ENCODE measurements at regions of chr11 and their contacts with region 1.

Region 1: DNA sequence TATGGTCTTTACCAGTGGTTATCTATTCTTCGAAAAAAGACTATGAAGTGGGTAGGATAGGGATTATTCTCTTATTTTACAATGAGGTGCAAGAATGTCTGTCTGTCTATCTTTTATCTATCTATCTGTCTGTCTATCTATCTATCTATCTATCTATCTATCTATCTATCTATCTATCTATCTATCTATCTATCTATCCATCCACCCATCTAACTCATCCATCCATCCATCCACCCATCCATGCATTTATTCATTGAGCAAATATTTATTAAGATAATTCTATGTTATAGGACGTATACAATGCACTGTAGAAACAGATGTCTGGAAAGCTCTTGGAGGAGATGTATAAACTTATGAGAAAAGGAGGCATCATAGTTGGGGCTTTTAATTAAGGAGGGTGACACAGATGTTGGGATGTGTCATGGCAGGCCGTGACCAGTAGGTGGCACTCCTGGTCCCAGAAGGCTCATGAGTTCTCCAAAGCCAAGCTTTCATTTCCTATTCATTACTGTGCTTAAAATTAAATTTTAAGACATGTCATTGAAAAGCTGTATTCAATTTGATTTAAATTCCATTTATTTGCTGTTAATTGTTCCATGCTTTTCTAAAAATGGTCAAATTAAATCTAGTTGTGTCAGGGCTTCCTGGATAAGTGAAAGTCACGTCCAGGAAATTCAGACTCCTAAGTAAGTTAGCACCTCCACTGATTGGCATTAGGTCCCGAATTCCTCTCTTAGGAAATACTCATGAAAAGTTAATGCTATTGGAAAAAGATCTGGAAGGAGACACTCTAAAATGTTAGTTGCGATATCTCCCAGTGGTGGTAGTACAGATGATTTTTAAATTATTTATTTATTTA is 19.0 kb upstream of the E2F8 start:
- DNase-seq: peak; percentile 73
- H3K4me3 ChIP-seq: peak overlapping the region in 1 of 2 experiments; percentile 24; a peak in 1 of 4 replicates
- H3K27ac ChIP-seq: no peak overlapping the region
- H3K4me1 ChIP-seq: no peaks in the 10 kb centered on the region
- H3K27me3 ChIP-seq: peaks cover 7% of the 10 kb centered on the region; the same call in 1 of the 2 replicates
- CTCF ChIP-seq: peak; percentile 97
- EP300 ChIP-seq: no peak
- RAD21 ChIP-seq: peak; percentile 77

Region 2: GRCh38 chr11:19076744-19077589 is 182.7 kb before region 1 on chr11:
- CTCF ChIA-PET with region 1: interaction called, 29 read pairs
- POLR2A ChIA-PET with region 1: no interaction called
- DNase-seq: peak; percentile 80
- H3K4me3 ChIP-seq: no peak overlapping the region; a peak in 1 of 4 replicates
- H3K27ac ChIP-seq: peak overlapping the region in 1 of 2 experiments; percentile 39; a peak in 1 of 4 replicates
- H3K4me1 ChIP-seq: peaks cover 0 to 15% of the 10 kb centered on the region in 2 experiments; a peak in 3 of 4 replicates
- H3K27me3 ChIP-seq: no peaks in the 10 kb centered on the region
- CTCF ChIP-seq: peak; percentile 98
- EP300 ChIP-seq: no peak
- RAD21 ChIP-seq: peak; percentile 72

Region 3: DNA sequence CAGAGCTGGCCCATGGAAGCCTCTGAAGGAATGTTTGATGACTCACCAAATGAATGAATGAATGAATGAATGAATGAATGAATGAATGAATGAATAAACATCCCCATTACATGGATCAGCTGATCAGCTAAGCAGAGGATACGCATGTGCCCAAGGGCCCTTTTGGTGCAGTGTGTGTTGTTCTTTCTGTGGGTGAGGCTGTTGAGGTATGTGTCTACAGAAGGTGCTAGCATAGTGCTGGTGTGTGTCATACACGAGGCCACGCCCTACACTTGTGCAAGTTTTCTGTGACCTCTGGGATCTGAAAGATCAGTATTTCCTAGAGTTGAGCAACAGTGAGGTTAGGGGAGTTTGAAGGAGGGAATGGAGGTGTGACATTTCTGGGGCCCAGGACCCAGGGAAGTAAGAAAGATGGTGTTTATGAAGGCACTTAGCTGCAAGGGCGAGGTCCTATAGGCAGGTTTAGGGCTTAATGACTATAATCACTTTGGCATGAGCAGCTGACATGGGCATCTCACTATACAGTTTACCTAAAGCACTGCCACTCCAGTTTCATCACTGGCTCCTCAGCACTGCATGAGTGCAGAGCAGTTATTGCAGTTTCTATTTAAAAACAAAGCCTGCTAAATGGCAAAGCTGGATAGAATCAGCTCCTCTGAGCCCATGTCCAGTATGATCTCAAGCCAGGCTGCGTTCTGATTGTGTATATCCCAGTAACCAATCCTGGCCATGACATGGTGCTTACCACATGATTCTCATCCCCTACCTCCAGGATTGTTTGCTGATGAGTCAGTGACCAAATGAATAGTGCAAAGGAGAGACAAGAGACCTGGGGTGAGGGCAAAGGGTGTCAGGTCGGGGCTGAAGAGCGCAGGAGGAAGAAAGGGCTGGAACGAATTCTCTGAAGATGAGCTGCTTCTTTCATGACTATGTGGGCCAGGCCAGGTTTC is 17.4 kb after region 1 on chr11:
- CTCF ChIA-PET with region 1: interaction called, 24 read pairs
- POLR2A ChIA-PET with region 1: no interaction called
- DNase-seq: no peak
- H3K4me3 ChIP-seq: no peak overlapping the region
- H3K27ac ChIP-seq: no peak overlapping the region
- H3K4me1 ChIP-seq: peaks cover 0 to 4% of the 10 kb centered on the region in 2 experiments; a peak in 1 of 4 replicates
- H3K27me3 ChIP-seq: 0 out of 2 replicates have a peak, but pooled peaks cover 4% of the 10 kb centered on the region
- CTCF ChIP-seq: no peak
- EP300 ChIP-seq: no peak
- RAD21 ChIP-seq: no peak

Region 4: GRCh38 chr11:19294444-19294843 is 34.7 kb after region 1 on chr11:
- CTCF ChIA-PET with region 1: interaction called, 15 read pairs
- POLR2A ChIA-PET with region 1: no interaction called
- DNase-seq: no peak
- H3K4me3 ChIP-seq: no peak overlapping the region
- H3K27ac ChIP-seq: no peak overlapping the region
- H3K4me1 ChIP-seq: no peaks in the 10 kb centered on the region; a peak in 1 of 4 replicates
- H3K27me3 ChIP-seq: peaks cover 13% of the 10 kb centered on the region
- CTCF ChIP-seq: no peak
- EP300 ChIP-seq: no peak
- RAD21 ChIP-seq: no peak

Region 5: DNA sequence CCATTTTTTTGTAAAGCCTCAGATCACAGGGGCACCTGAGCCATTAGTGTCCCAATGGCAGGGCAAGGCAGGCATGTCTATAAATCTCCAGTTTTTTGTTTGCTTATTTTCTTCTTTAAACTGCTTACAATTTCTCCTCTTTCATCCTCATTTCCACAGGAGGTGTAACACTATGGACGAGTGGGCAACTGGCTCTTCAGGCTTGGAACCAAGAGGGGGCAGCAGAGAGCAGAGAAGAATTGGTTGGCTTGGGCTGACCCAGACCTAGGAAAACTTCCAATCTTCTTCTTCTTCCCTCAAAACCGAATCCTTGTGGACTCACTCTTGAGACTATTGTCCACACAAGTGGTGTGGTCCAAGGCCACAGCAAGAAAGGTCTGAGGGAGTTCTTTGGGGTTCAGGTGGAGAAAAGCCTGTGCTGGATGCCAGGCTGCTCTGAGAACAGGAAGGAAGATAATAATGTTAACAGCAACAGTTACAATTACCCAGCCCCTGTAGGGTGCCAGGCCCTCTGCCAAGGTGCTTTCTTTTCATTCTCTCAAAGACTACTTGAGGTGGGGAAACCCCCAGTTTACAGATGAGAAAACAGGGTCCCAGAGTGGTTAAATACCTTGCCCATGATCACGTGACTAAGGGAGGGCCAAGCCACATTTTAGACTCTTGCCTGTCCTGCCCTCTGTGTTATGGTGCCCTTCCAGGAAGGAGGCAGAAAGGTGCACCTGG is 51.8 kb after region 1 on chr11:
- CTCF ChIA-PET with region 1: interaction called, 25 read pairs
- POLR2A ChIA-PET with region 1: no interaction called
- DNase-seq: peak; percentile 66
- H3K4me3 ChIP-seq: peak overlapping the region in 1 of 2 experiments; percentile 23; a peak in 1 of 4 replicates
- H3K27ac ChIP-seq: no peak overlapping the region
- H3K4me1 ChIP-seq: peaks cover 0 to 12% of the 10 kb centered on the region in 2 experiments; a peak in 1 of 4 replicates
- H3K27me3 ChIP-seq: peaks cover 25% of the 10 kb centered on the region; the same call in 1 of the 2 replicates
- CTCF ChIP-seq: peak; percentile 85
- EP300 ChIP-seq: no peak
- RAD21 ChIP-seq: peak; percentile 70

Region 6: GRCh38 chr11:19394525-19395016 is 134.9 kb after region 1 on chr11:
- CTCF ChIA-PET with region 1: no interaction called
- POLR2A ChIA-PET with region 1: no interaction called
- DNase-seq: no peak
- H3K4me3 ChIP-seq: no peak overlapping the region
- H3K27ac ChIP-seq: no peak overlapping the region
- H3K4me1 ChIP-seq: no peaks in the 10 kb centered on the region
- H3K27me3 ChIP-seq: peaks cover 16% of the 10 kb centered on the region; the same call in 1 of the 2 replicates
- CTCF ChIP-seq: no peak
- EP300 ChIP-seq: no peak
- RAD21 ChIP-seq: no peak

Measured in SK-N-SH (cell line).